Heart left ventricle (tissue), 16 donors: ENCODE measurements at regions of chr13 and their contacts with region 1.

Region 1: GRCh38 chr13:77898097-77898496 is 20.5 kb downstream of the EDNRB start:
- DNase-seq: no peak
- ATAC-seq: peak in 2 of 4 donors; percentile 49 to 59
- H3K4me3 ChIP-seq: peak overlapping the region in 1 of 12 donors; percentile 3
- H3K27ac ChIP-seq: peak overlapping the region; percentile 27 to 94 (median 82)
- H3K4me1 ChIP-seq: peaks cover 0 to 44% (median 19%) of the 10 kb centered on the region in 12 donors
- H3K27me3 ChIP-seq: no peaks in the 10 kb centered on the region
- CTCF ChIP-seq: no peak
- POLR2A ChIP-seq: no peak

Region 2: GRCh38 chr13:77779552-77780272 is 118.4 kb before region 1 on chr13:
- intact Hi-C with region 1: loop called in 1 of 10 experiments (anchors 10 kb)
- DNase-seq: peak in 2 of 5 donors; percentile 31 to 34
- ATAC-seq: peak in 3 of 4 donors; percentile 70 to 75 (median 71)
- H3K4me3 ChIP-seq: no peak overlapping the region
- H3K27ac ChIP-seq: peak overlapping the region in 1 of 12 donors; percentile 65
- H3K4me1 ChIP-seq: peaks cover 0 to 9% (median 0%) of the 10 kb centered on the region in 12 donors
- H3K27me3 ChIP-seq: no peaks in the 10 kb centered on the region
- CTCF ChIP-seq: peak; percentile 58 to 89 (median 74)
- POLR2A ChIP-seq: no peak

Region 3: DNA sequence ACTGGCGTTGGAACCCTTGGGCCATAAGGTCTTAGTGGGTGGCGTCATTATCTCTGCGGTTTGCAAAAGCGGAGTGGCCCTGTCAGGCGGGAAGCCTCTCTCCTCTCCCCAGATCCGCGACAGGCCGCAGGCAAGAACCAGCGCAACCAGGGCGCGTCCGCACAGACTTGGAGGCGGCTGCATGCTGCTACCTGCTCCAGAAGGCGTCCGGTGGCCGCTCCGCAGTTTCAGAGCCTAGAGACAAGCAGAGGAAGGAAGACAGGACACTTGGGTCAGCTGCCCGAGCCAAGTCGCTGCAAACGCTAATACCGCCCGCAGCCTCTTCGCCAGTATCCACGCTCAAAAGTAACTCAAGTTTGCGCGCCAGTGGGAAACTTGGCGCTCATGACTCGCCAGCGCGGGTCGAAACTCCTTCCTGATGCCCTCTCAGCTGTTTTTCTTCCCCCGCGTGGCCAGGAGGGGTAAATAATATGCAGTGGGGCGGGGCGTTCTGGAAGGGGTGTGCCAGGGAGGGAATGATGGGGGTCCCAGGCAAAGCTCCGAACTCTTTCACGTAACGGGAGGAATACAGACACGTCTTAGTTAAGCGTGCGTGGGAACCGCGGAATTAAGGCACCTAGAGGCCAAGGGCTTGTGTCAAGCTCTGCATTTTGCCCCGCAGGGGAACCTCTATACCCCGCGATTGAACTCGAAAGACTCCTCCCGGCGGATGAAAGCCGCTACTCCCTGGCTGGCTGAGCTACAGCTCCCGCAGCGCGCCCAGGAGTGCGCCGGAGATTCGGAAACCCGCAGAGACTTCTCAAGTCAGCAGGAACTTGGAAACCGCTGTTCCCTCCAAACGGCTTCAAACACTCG is 20.5 kb after region 1 on chr13 and contains the start of gene EDNRB:
- intact Hi-C with region 1: loop called in 1 of 10 experiments (anchors 2 kb)
- DNase-seq: peak; percentile 56 to 75 (median 64)
- ATAC-seq: peak; percentile 65 to 73 (median 72)
- H3K4me3 ChIP-seq: peak within 1 kb of the TSS; percentile 60 to 85 (median 70)
- H3K27ac ChIP-seq: peak within 1 kb of the TSS; percentile 58 to 87 (median 80)
- H3K4me1 ChIP-seq: peaks cover 0 to 16% (median 2%) of the 10 kb centered on the region in 12 donors
- H3K27me3 ChIP-seq: peaks cover 0 to 16% (median 0%) of the 10 kb centered on the region in 9 donors
- CTCF ChIP-seq: peak in 7 of 12 donors; percentile 8 to 33 (median 18)
- POLR2A ChIP-seq: peak in 1 of 2 donors; percentile 35
- total RNA-seq, gene EDNRB: 9.8 to 72.0 (median 26.9) TPM

Region 4: DNA sequence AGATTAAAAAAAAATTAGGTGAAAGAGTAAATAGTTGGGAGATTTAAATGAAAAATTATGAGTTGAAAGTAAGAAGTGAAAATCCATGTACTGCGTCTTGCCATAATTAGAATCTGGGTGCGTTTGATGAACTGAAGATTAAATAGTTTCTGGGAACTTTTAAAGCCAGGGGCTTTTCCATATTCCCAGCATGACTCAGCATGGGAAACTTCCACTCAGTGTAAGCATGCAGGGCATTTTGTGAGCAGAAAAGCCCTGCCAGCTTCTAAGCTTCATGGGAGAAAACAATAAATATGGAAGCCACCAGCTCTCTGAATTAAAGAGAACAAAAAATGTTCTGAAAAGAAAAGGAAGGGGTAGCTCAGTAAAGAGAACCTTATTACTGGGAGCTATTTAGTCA is 82.5 kb after region 1 on chr13:
- intact Hi-C with region 1: loop called in 2 of 10 experiments (anchors 5 to 10 kb)
- DNase-seq: peak in 1 of 5 donors; percentile 23
- ATAC-seq: peak in 2 of 4 donors; percentile 64 to 74
- H3K4me3 ChIP-seq: no peak overlapping the region
- H3K27ac ChIP-seq: peak overlapping the region in 7 of 12 donors; percentile 4 to 44 (median 18)
- H3K4me1 ChIP-seq: peaks cover 0 to 8% (median 0%) of the 10 kb centered on the region in 12 donors
- H3K27me3 ChIP-seq: no peaks in the 10 kb centered on the region
- CTCF ChIP-seq: no peak
- POLR2A ChIP-seq: no peak

Region 5: GRCh38 chr13:77991003-77991402 is 92.9 kb after region 1 on chr13:
- intact Hi-C with region 1: loop called in 2 of 10 experiments (anchors 5 to 10 kb)
- DNase-seq: peak in 3 of 5 donors; percentile 30 to 34 (median 34)
- ATAC-seq: peak; percentile 36 to 67 (median 48)
- H3K4me3 ChIP-seq: no peak overlapping the region
- H3K27ac ChIP-seq: peak overlapping the region in 4 of 12 donors; percentile 4 to 54 (median 38)
- H3K4me1 ChIP-seq: peaks cover 0 to 35% (median 10%) of the 10 kb centered on the region in 12 donors
- H3K27me3 ChIP-seq: no peaks in the 10 kb centered on the region
- CTCF ChIP-seq: no peak
- POLR2A ChIP-seq: no peak

Region 6: DNA sequence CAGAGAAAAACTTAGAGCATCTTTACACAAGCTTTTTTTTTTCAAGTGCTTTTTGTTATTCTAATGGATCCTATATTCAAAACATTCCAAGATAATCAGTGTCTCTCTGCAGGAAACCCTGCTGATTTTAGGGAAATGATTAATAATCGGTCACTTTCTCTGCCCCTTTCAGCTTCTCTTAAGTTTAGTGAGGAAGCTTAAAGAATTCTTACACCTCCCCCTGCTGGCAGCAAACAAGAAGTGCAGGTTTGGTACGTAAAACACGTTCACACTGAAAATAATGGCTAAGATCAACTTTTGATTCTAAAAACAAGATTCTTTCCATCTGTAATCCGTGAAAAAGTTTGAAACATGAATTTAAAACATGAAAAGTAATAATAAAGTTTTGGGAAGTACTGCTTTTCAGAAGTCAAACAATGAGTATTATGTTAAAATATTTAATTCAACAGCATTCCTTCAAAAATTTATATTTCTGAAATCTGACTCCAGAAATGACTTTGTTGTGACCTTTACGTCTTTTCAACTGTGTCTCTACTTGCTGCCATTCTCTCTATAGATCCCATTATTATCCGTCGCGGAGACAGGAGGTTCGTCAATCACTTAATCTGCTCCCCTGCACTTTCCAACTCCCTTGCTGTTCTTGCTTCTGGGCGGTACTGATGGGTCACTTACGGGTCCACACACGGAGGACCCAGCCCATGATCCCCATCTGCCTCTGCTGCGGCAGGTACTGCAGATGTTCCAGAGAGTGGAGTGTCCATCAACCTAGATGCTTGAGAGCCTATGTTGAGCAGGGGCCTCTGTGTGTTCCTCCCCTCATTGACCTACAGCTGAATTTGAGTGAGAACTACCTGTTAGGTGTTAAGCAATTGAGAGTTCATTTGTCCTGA is 223.6 kb after region 1 on chr13:
- intact Hi-C with region 1: loop called in 1 of 10 experiments (anchors 10 kb)
- DNase-seq: peak in 3 of 5 donors; percentile 30 to 43 (median 42)
- ATAC-seq: peak in 2 of 4 donors; percentile 47 to 65
- H3K4me3 ChIP-seq: peak overlapping the region in 2 of 12 donors; percentile 19 to 21
- H3K27ac ChIP-seq: no peak overlapping the region
- H3K4me1 ChIP-seq: peaks cover 0 to 8% (median 0%) of the 10 kb centered on the region in 12 donors
- H3K27me3 ChIP-seq: peaks cover 0 to 3% (median 0%) of the 10 kb centered on the region in 9 donors
- CTCF ChIP-seq: peak; percentile 82 to 96 (median 90)
- POLR2A ChIP-seq: no peak